ENCODE measurements at regions of chr1 and their contacts with region 1.

Region 1: DNA sequence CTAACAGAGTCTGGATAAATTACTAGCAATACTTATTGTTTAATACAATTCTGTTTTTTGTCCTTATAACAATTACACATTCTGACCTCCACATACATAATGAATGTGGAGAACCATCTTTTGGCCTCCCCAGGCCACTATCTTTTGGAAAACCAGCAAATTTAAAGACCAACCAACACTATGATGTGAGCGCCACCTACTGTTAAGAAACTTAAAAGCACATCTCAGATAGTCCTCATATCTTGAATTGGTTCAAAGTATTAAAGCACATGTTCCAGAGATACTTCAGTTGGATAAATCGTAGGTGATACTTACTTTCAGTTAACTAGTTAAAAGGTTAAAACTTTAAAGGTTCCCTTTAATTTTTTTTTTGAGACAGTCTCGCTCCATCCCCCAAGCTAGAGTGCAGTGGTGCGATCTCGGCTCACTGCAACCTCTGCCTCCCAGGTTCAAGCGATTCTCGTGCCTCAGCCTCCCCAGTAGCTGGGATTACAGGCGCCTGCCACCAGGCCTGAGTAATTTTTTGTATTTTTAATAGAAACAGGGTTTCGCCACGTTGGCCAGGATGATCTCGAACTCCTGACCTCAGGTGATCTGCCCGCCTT is 29.3 kb upstream of the USP1 start:
- DNase-seq: no peak
- ATAC-seq: peak; percentile 69

Region 2: DNA sequence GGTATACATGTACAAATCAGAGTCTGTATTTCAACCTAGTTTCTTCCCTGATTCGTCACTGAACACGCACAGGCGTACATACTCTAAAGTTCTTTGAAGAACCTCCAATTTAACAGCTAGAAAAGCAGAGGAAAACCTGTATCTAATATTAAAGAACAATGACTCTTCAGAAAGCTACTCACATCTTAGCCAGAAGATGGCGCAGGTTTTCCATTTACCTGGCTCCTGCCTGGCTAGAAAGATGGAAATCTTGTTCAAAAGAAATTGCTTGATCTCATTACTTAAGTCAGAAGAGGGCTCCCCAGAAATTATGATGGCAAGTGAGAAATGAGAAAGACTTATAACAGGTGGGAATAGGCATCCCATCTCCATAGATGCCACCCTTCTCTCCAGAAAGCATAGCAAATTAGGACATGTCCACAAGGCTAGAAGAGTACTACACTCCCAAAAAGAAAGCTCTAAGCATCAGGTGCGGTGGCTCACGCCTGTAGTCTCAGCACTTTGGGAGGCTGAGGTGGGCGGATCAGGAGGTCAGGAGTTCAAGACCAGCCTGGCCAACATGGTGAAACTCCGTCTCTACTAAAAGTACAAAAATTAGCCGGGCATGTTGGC is 231.8 kb before region 1 on chr1:
- intact Hi-C with region 1: loop called (anchors 2 to 5 kb)
- DNase-seq: peak in 1 of 2 donors; percentile 32
- ATAC-seq: peak; percentile 70

Measured in left colon (tissue), 2 donors.